ENCODE measurements at regions of chr17 and their contacts with region 1.

Region 1: DNA sequence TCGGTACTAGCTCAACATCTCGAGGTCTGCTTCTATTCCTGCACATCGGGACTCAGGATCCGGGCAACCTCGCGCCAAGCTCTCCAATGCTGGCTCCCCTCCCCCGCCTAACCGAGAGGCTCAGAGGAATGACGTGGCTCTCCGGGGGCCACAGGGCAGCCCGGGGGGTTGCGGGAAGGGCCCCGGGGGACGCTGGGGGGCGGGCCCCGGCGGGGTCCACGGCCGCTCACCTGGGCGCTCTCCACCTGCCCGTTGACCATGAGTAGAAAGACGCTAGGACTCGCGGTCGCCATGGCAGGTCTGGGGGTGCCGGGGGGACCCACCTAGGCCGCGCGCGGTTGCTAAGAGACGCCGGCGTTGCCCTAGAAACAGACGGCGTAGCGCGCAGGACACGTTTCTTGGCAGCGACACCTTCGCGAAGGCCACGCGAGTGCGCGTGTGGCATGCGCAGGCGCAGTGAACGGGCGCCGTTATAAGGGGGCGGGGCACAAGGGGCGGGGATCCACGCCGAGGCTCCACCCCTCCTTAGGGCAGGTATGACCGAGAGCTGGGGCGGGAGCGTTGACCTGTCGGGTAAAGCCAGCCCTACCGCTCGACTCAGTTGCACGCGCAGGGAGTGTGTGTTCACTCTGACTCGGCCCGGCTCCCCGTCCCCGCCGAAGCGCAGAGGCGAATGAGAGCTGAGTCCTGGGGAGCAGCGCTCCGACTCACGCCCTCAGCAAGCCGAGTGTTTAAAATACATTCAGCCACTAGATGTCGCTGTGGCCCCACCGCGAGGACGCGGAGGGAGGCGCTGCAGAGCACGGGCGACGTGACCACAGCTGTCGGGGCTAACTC is at the start of gene B9D1:
- DNase-seq: peak; percentile 94
- ATAC-seq: peak; percentile 93
- H3K4me3 Mint-ChIP-seq: peak within 1 kb of the TSS; percentile 81
- H3K27ac Mint-ChIP-seq: peak within 1 kb of the TSS; percentile 76
- H3K4me1 Mint-ChIP-seq: peaks cover 10% of the 10 kb centered on the region
- H3K27me3 Mint-ChIP-seq: peaks cover 16% of the 10 kb centered on the region
- total RNA-seq, gene B9D1: 1.1 to 2.6 TPM

Region 2: GRCh38 chr17:19377602-19378392 is 15.3 kb after region 1 on chr17:
- CTCF ChIA-PET with region 1: interaction called, 46 read pairs
- DNase-seq: peak; percentile 98
- ATAC-seq: peak; percentile 96
- H3K4me3 Mint-ChIP-seq: peak overlapping the region; percentile 95
- H3K27ac Mint-ChIP-seq: peak overlapping the region; percentile 97
- H3K4me1 Mint-ChIP-seq: peaks cover 23% of the 10 kb centered on the region
- H3K27me3 Mint-ChIP-seq: peaks cover 6% of the 10 kb centered on the region

Region 3: DNA sequence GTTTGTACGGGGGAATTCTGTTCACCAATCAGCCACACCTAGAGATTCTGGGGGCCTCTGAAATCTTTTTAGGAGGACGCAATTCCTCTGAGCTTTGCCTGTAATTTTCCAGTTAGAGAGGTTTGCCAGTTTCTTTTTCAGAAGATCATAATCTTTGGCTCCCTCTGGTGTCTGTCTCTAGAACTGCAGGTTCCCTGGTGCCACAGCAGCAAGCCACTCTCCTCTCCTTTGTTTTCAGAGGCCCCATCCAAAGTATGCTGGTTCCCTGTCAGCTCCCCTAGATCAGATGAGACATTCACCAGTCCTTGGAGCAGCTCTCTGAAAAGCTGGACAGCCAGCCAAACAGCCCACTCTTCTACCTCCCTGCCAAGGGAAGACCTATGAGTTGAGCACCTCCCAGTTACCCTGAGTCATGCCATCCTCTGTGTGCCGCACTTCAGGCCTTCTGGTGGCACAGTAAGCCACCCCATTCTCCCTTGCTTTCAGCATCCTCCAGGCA is 84.6 kb after region 1 on chr17:
- CTCF ChIA-PET with region 1: interaction called, 114 read pairs
- DNase-seq: peak; percentile 77
- ATAC-seq: peak; percentile 49
- H3K4me3 Mint-ChIP-seq: no peak overlapping the region
- H3K27ac Mint-ChIP-seq: no peak overlapping the region
- H3K4me1 Mint-ChIP-seq: peaks cover 2% of the 10 kb centered on the region
- H3K27me3 Mint-ChIP-seq: peaks cover 29% of the 10 kb centered on the region

Region 4: GRCh38 chr17:19457830-19458271 is 95.4 kb after region 1 on chr17:
- CTCF ChIA-PET with region 1: interaction called, 20 read pairs
- DNase-seq: no peak
- ATAC-seq: no peak
- H3K4me3 Mint-ChIP-seq: no peak overlapping the region
- H3K27ac Mint-ChIP-seq: no peak overlapping the region
- H3K4me1 Mint-ChIP-seq: peaks cover 5% of the 10 kb centered on the region
- H3K27me3 Mint-ChIP-seq: peaks cover 26% of the 10 kb centered on the region

Region 5: DNA sequence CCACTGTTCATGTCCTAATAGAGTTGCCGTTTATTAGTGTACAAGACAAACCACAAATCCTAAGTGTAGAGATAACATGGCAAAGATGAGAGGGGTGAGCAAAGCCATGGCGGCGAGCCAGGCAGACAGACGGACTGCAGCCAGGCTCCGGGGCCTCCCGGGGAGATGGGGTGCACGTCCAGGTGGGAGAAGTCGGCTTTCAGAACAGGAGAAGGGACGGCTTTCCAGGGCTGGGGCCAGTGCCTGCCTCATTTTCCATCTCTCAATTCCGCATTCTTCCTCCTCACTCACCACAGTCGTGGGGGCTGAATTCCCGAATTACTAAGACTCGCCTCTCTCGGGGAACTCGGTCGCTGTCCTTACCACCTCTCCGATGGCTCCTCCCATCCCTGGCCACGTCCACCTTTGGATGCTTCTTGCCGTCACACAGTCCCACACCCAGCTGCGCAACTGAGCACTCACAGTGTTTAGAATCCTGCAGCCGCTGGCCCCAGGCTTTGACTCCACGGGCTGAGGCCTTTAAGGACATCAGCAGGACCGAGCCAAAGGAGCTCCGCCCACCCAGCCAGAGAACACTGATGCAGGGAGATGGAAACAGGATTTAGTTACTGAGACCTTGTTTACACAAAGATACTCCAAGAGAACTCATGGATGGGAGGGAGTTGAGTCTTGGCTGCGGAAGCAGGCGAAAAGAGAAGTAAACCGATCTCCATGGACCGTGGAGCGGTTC is 108.2 kb after region 1 on chr17:
- CTCF ChIA-PET with region 1: interaction called, 11 read pairs
- DNase-seq: no peak
- ATAC-seq: no peak
- H3K4me3 Mint-ChIP-seq: no peak overlapping the region
- H3K27ac Mint-ChIP-seq: no peak overlapping the region
- H3K4me1 Mint-ChIP-seq: no peaks in the 10 kb centered on the region
- H3K27me3 Mint-ChIP-seq: peaks cover 4% of the 10 kb centered on the region

Region 6: DNA sequence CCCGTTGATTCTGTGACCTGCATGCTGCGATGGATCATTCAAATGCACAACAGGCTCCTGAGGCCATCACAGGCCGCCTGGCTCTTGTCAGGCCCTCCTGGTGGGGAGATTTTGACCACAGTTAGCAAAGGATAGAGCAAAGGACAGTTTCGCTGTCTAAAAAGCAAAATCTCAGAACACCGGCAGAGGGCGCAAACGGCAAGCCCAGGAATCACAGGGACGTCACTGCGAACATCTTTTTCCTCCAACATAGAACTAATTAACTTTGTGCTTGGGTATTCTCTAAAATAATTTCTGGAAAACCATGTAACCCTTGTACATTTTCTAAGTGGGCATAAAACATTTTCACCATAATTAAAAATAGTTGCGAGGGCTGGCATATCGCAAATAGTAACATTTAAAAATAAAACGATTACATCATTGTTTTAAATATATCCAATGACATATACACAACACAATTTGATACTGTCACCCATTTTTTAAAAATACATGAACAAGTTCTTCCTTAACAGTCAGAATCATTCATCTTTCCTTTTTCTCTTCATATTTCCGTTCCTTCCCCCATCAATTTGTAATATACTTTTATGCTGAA is 151.5 kb after region 1 on chr17:
- CTCF ChIA-PET with region 1: interaction called, 10 read pairs
- DNase-seq: peak; percentile 73
- ATAC-seq: peak; percentile 61
- H3K4me3 Mint-ChIP-seq: no peak overlapping the region
- H3K27ac Mint-ChIP-seq: no peak overlapping the region
- H3K4me1 Mint-ChIP-seq: peaks cover 2% of the 10 kb centered on the region
- H3K27me3 Mint-ChIP-seq: no peaks in the 10 kb centered on the region

Region 7: DNA sequence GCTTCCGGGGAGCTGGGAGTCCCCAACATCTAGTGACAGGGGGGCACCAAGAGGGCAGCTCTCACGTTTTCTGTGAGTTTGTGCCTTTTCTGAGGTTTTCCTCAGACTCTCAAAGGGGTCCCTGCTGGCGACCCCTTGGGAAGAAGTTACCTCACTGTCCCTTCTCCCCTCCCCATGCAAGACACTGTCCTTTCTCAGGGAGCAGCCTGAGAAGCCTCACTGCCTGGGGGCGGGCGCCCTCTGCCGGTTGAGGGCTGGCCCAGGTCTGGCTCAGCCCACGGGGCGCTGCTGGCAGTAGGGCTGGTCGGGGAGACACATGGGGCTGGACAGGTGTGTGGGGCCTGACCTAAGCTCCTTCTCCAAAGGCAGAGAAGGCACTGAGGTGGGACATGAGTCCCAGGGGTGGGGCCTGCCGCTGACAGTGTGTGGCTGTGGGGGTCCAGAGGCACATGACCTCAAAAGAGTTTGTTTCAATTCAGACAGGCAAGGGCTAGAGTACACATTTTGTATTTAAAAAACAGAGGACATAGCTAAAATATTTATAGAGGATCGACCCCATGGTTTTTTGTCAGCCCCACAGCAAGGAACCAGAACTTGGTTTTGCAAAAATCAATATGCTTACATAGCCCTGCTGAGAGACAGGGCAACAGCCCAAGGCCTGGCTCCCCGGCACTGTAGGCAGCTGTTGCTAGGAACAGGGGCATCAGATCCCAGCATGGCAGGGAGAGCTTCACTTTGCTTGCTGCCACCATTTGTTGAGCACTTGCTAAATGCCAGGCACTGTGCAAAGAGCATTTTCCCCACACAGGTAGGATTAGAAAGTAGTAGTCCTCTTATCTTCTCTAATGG is 404.2 kb after region 1 on chr17:
- CTCF ChIA-PET with region 1: interaction called, 12 read pairs
- DNase-seq: peak; percentile 79
- ATAC-seq: peak; percentile 86
- H3K4me3 Mint-ChIP-seq: no peak overlapping the region
- H3K27ac Mint-ChIP-seq: no peak overlapping the region
- H3K4me1 Mint-ChIP-seq: peaks cover 14% of the 10 kb centered on the region
- H3K27me3 Mint-ChIP-seq: peaks cover 5% of the 10 kb centered on the region